ENCODE measurements at regions of chrX and their contacts with region 1.

Region 1: GRCh38 chrX:150127216-150127615 is 188.9 kb upstream of the EOLA2 start:
- DNase-seq: no peak
- ATAC-seq: no peak
- H3K4me3 ChIP-seq: no peak overlapping the region
- H3K27ac ChIP-seq: no peak overlapping the region
- H3K4me1 ChIP-seq: no peaks in the 10 kb centered on the region
- H3K27me3 ChIP-seq: no peaks in the 10 kb centered on the region
- CTCF ChIP-seq: no peak
- EP300 ChIP-seq: no peak
- POLR2A ChIP-seq: no peak
- RAD21 ChIP-seq: no peak

Region 2: GRCh38 chrX:150062292-150063137 is 64.7 kb before region 1 on chrX:
- CTCF ChIA-PET with region 1: no interaction called
- POLR2A ChIA-PET with region 1: no interaction called
- RAD21 ChIA-PET with region 1: no interaction called
- SMC1A ChIA-PET with region 1: no interaction called
- in situ Hi-C with region 1: loop called (anchors 10 kb)
- intact Hi-C with region 1: no loop called
- DNase-seq: no peak
- ATAC-seq: no peak
- H3K4me3 ChIP-seq: no peak overlapping the region
- H3K27ac ChIP-seq: no peak overlapping the region
- H3K4me1 ChIP-seq: no peaks in the 10 kb centered on the region
- H3K27me3 ChIP-seq: no peaks in the 10 kb centered on the region
- CTCF ChIP-seq: no peak
- EP300 ChIP-seq: no peak
- POLR2A ChIP-seq: no peak
- RAD21 ChIP-seq: no peak

Region 3: DNA sequence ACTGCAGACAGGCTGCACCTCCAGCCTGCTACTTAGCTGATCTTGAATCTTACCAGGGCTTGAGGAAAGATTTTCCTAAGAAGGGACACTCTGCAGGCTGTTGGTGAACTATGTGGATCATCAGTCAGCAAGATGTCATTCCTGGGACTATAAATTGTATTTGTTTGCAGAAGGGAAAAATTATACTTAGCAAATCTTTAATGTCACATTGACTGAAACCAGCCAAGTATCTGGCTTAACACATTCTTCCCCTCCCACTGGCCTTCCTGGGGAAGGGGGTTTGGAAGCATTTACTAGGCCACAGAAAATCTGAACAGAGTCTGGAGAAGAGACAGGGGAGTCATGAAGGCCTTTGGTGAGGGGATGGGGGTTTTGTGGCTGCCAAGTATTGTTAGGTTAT is 32.2 kb before region 1 on chrX:
- CTCF ChIA-PET with region 1: no interaction called
- POLR2A ChIA-PET with region 1: no interaction called
- RAD21 ChIA-PET with region 1: no interaction called
- SMC1A ChIA-PET with region 1: no interaction called
- in situ Hi-C with region 1: no loop called
- intact Hi-C with region 1: no loop called
- DNase-seq: no peak
- ATAC-seq: no peak
- H3K4me3 ChIP-seq: no peak overlapping the region
- H3K27ac ChIP-seq: no peak overlapping the region
- H3K4me1 ChIP-seq: no peaks in the 10 kb centered on the region
- H3K27me3 ChIP-seq: no peaks in the 10 kb centered on the region
- CTCF ChIP-seq: no peak
- EP300 ChIP-seq: no peak
- POLR2A ChIP-seq: no peak
- RAD21 ChIP-seq: no peak

Region 4: GRCh38 chrX:150813922-150814321 is 686.7 kb after region 1 on chrX:
- CTCF ChIA-PET with region 1: no interaction called
- POLR2A ChIA-PET with region 1: no interaction called
- RAD21 ChIA-PET with region 1: no interaction called
- SMC1A ChIA-PET with region 1: no interaction called
- in situ Hi-C with region 1: no loop called
- intact Hi-C with region 1: no loop called
- DNase-seq: no peak
- ATAC-seq: no peak
- H3K4me3 ChIP-seq: no peak overlapping the region
- H3K27ac ChIP-seq: no peak overlapping the region
- H3K4me1 ChIP-seq: no peaks in the 10 kb centered on the region
- H3K27me3 ChIP-seq: no peaks in the 10 kb centered on the region
- CTCF ChIP-seq: no peak
- EP300 ChIP-seq: no peak
- POLR2A ChIP-seq: no peak
- RAD21 ChIP-seq: no peak